T-cell (primary cell): ENCODE measurements at regions of chr22 and their contacts with region 1.

Region 1: DNA sequence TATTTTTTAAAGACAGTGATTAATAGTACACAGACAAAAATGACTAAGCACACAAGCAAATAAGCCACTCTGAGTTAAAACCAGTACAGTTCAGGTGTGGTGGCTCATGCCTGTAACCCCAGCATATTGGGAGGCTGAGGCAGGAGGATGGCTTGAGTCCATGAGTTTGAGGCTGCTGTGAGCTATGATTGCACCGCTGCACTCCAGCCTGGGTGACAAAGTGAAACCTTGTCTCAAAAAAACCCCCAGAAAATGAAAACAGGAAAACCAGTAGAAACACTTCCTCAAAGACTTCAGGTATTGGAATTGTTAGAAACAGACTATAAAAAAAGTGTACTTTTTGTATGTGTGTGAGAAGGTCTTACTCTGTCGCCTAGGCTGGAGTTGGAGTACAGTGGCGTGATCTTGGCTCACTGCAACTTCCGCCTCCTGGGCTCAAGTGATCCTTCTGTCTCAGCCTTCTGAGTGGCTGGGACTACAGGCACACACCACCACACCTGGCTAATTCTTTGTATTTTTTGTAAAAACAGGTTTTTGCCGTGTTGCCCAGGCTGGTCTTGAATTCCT is 33.0 kb downstream of the PPP6R2 start:
- DNase-seq: no peak
- ATAC-seq: peak in 1 of 4 experiments; percentile 34
- H3K4me3 ChIP-seq: no peak overlapping the region
- H3K4me3 Mint-ChIP-seq: peak overlapping the region in 1 of 3 donors; percentile 34
- H3K27ac ChIP-seq: no peak overlapping the region
- H3K27ac Mint-ChIP-seq: peak overlapping the region; percentile 15 to 83
- H3K4me1 ChIP-seq: peaks cover 3 to 17% of the 10 kb centered on the region in 2 experiments
- H3K4me1 Mint-ChIP-seq: peaks cover 5 to 19% (median 12%) of the 10 kb centered on the region in 3 donors
- H3K27me3 ChIP-seq: no peaks in the 10 kb centered on the region
- H3K27me3 Mint-ChIP-seq: no peaks in the 10 kb centered on the region

Region 2: GRCh38 chr22:50085211-50085972 is 290.8 kb before region 1 on chr22 and contains the start of gene MLC1:
- CTCF ChIA-PET with region 1: no interaction called
- POLR2A ChIA-PET with region 1: interaction called in 1 of 2 experiments, 17 read pairs
- DNase-seq: peak in 10 of 35 experiments; percentile 3 to 37 (median 10)
- ATAC-seq: peak in 1 of 4 experiments; percentile 52
- H3K4me3 ChIP-seq: peak within 1 kb of the TSS; percentile 14 to 58
- H3K4me3 Mint-ChIP-seq: no peak within 1 kb of the TSS
- H3K27ac ChIP-seq: no peak within 1 kb of the TSS
- H3K27ac Mint-ChIP-seq: peak within 1 kb of the TSS in 1 of 2 donors; percentile 16
- H3K4me1 ChIP-seq: peaks cover 0 to 4% of the 10 kb centered on the region in 2 experiments
- H3K4me1 Mint-ChIP-seq: peaks cover 0 to 13% (median 2%) of the 10 kb centered on the region in 3 donors
- H3K27me3 ChIP-seq: peaks cover 0 to 51% of the 10 kb centered on the region in 2 experiments
- H3K27me3 Mint-ChIP-seq: peaks cover 13 to 36% of the 10 kb centered on the region in 2 donors
- total RNA-seq, gene MLC1: 0.92 to 2.1 (median 1.1) TPM